ENCODE measurements at regions of chr4 and their contacts with region 1.

Region 1: GRCh38 chr4:163544407-163545038 is 50.0 kb downstream of the TMA16 start:
- DNase-seq: no peak
- ATAC-seq: peak; percentile 95
- H3K4me3 ChIP-seq: no peak overlapping the region
- H3K27ac ChIP-seq: no peak overlapping the region
- H3K4me1 ChIP-seq: no peaks in the 10 kb centered on the region
- H3K27me3 ChIP-seq: no peaks in the 10 kb centered on the region
- CTCF ChIP-seq: peak; percentile 92 to 93 (median 92)
- EP300 ChIP-seq: no peak
- POLR2A ChIP-seq: no peak
- RAD21 ChIP-seq: peak; percentile 84

Region 2: GRCh38 chr4:163107754-163108153 is 436.8 kb before region 1 on chr4:
- CTCF ChIA-PET with region 1: interaction called, 4 read pairs
- POLR2A ChIA-PET with region 1: no interaction called
- RAD21 ChIA-PET with region 1: no interaction called
- SMC1A ChIA-PET with region 1: interaction called, 3 read pairs
- in situ Hi-C with region 1: no loop called
- intact Hi-C with region 1: loop called (anchors 5 kb)
- DNase-seq: no peak
- ATAC-seq: peak; percentile 63
- H3K4me3 ChIP-seq: no peak overlapping the region
- H3K27ac ChIP-seq: no peak overlapping the region
- H3K4me1 ChIP-seq: peaks cover 4% of the 10 kb centered on the region
- H3K27me3 ChIP-seq: no peaks in the 10 kb centered on the region
- CTCF ChIP-seq: peak; percentile 13 to 30 (median 25); a peak in 2 of 6 replicates
- EP300 ChIP-seq: no peak
- POLR2A ChIP-seq: no peak
- RAD21 ChIP-seq: peak; percentile 61

Region 3: DNA sequence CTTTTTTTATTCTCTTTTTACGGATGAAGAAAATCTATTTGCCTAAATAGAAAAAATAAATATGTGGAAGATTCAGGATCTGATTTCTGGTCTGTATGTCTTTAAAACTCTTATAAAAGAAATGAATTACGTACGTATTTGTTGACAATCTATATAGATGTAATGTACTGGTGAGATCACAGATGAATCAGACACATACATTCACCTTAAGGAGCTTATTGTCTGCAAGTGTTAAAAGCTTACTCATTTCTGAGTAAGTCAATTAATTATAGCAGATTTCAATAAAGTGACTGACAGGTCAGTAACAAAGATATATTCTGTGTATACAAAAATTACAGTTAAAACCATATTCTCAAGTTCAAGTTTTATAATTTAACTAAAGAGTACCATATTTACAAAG is 311.2 kb before region 1 on chr4:
- CTCF ChIA-PET with region 1: no interaction called
- POLR2A ChIA-PET with region 1: no interaction called
- RAD21 ChIA-PET with region 1: no interaction called
- SMC1A ChIA-PET with region 1: no interaction called
- in situ Hi-C with region 1: no loop called
- intact Hi-C with region 1: no loop called
- DNase-seq: no peak
- ATAC-seq: no peak
- H3K4me3 ChIP-seq: no peak overlapping the region
- H3K27ac ChIP-seq: no peak overlapping the region
- H3K4me1 ChIP-seq: no peaks in the 10 kb centered on the region
- H3K27me3 ChIP-seq: no peaks in the 10 kb centered on the region
- CTCF ChIP-seq: no peak
- EP300 ChIP-seq: no peak
- POLR2A ChIP-seq: no peak
- RAD21 ChIP-seq: no peak

Region 4: GRCh38 chr4:163473576-163473975 is 70.9 kb before region 1 on chr4 and contains the start of gene TKTL2:
- CTCF ChIA-PET with region 1: interaction called, 11 read pairs
- POLR2A ChIA-PET with region 1: no interaction called
- RAD21 ChIA-PET with region 1: interaction called, 3 read pairs
- SMC1A ChIA-PET with region 1: interaction called, 3 read pairs
- in situ Hi-C with region 1: no loop called
- intact Hi-C with region 1: no loop called
- DNase-seq: no peak
- ATAC-seq: no peak
- H3K4me3 ChIP-seq: no peak within 1 kb of the TSS
- H3K27ac ChIP-seq: no peak within 1 kb of the TSS
- H3K4me1 ChIP-seq: no peaks in the 10 kb centered on the region
- H3K27me3 ChIP-seq: no peaks in the 10 kb centered on the region
- CTCF ChIP-seq: no peak
- EP300 ChIP-seq: no peak
- POLR2A ChIP-seq: no peak
- RAD21 ChIP-seq: no peak
- polyA plus RNA-seq, gene TKTL2: 0.03 TPM in 1 of 2 experiments, not detected in the other

Region 5: DNA sequence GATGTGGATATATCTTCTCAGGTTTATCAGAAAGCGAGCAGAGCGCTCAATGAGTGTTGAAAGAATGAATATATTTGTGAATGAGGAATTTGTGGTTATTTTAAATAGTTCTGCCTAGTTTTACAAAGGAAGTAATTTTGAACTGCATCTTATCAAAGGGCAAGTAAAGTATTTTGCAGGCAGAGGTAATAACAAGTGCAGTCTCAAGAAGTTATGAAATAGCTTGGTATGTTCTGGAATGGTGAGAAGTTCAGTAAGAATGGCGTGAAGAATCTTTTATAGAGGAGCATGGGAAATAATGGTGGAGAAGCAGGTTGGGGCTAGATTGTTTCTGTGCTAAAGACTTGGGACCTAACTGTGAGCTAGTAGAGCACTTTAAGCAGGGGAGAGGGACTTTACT is 39.1 kb before region 1 on chr4:
- CTCF ChIA-PET with region 1: interaction called, 18 read pairs
- POLR2A ChIA-PET with region 1: interaction called, 3 read pairs
- RAD21 ChIA-PET with region 1: no interaction called
- SMC1A ChIA-PET with region 1: interaction called, 10 read pairs
- in situ Hi-C with region 1: no loop called
- intact Hi-C with region 1: no loop called
- DNase-seq: no peak
- ATAC-seq: peak; percentile 11; the same call in 2 of the 3 replicates
- H3K4me3 ChIP-seq: no peak overlapping the region
- H3K27ac ChIP-seq: no peak overlapping the region
- H3K4me1 ChIP-seq: peaks cover 10% of the 10 kb centered on the region
- H3K27me3 ChIP-seq: no peaks in the 10 kb centered on the region
- CTCF ChIP-seq: no peak
- EP300 ChIP-seq: no peak
- POLR2A ChIP-seq: no peak
- RAD21 ChIP-seq: no peak

Region 6: GRCh38 chr4:163562496-163562895 is 18.0 kb after region 1 on chr4:
- CTCF ChIA-PET with region 1: interaction called, 6 read pairs
- POLR2A ChIA-PET with region 1: no interaction called
- RAD21 ChIA-PET with region 1: no interaction called
- SMC1A ChIA-PET with region 1: interaction called, 14 read pairs
- in situ Hi-C with region 1: no loop called
- intact Hi-C with region 1: no loop called
- DNase-seq: no peak
- ATAC-seq: peak; percentile 52
- H3K4me3 ChIP-seq: no peak overlapping the region
- H3K27ac ChIP-seq: no peak overlapping the region
- H3K4me1 ChIP-seq: peaks cover 8% of the 10 kb centered on the region; the same call in 1 of the 2 replicates
- H3K27me3 ChIP-seq: no peaks in the 10 kb centered on the region
- CTCF ChIP-seq: no peak
- EP300 ChIP-seq: no peak
- POLR2A ChIP-seq: no peak
- RAD21 ChIP-seq: no peak

Region 7: GRCh38 chr4:163694385-163694784 is 149.9 kb after region 1 on chr4:
- CTCF ChIA-PET with region 1: interaction called, 16 read pairs
- POLR2A ChIA-PET with region 1: no interaction called
- RAD21 ChIA-PET with region 1: no interaction called
- SMC1A ChIA-PET with region 1: interaction called, 3 read pairs
- in situ Hi-C with region 1: no loop called
- intact Hi-C with region 1: no loop called
- DNase-seq: no peak
- ATAC-seq: no peak
- H3K4me3 ChIP-seq: no peak overlapping the region
- H3K27ac ChIP-seq: no peak overlapping the region
- H3K4me1 ChIP-seq: no peaks in the 10 kb centered on the region
- H3K27me3 ChIP-seq: no peaks in the 10 kb centered on the region
- CTCF ChIP-seq: no peak
- EP300 ChIP-seq: no peak
- POLR2A ChIP-seq: no peak
- RAD21 ChIP-seq: no peak

Region 8: GRCh38 chr4:163833669-163834068 is 289.1 kb after region 1 on chr4:
- CTCF ChIA-PET with region 1: no interaction called
- POLR2A ChIA-PET with region 1: no interaction called
- RAD21 ChIA-PET with region 1: no interaction called
- SMC1A ChIA-PET with region 1: no interaction called
- in situ Hi-C with region 1: no loop called
- intact Hi-C with region 1: no loop called
- DNase-seq: no peak
- ATAC-seq: no peak
- H3K4me3 ChIP-seq: no peak overlapping the region
- H3K27ac ChIP-seq: no peak overlapping the region
- H3K4me1 ChIP-seq: no peaks in the 10 kb centered on the region
- H3K27me3 ChIP-seq: no peaks in the 10 kb centered on the region
- CTCF ChIP-seq: no peak
- EP300 ChIP-seq: no peak
- POLR2A ChIP-seq: no peak
- RAD21 ChIP-seq: no peak

Region 9: DNA sequence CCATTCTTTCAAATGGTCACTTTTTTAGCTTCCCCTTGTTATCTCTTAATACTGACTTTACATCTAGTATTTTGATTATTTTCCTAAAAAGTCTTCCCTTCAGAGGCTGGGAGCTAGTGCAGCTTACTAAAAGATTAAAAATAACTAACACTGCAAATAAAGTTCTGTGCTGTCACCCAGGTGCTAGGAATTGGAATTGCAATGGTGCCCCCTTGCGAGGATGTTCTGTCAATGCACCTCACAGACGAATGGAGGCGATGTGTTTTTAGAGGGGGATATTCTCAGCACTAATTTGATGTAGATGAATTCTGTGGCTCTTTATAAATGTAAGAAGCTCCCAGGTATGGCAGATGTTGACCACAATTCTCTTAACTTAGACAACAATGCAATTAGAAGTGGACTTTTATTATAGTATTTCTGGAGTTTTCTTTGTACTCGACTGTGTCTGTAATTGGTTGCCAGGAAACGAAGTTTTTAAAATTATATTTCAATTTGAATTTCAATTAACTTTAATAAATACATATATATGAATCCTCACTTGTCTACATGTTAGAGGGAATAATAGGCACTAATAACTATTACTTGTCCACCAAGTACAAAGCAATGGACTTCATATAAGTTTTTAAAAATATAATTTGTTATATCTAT is 1187.4 kb after region 1 on chr4:
- CTCF ChIA-PET with region 1: interaction called, 43 read pairs
- POLR2A ChIA-PET with region 1: no interaction called
- RAD21 ChIA-PET with region 1: interaction called, 18 read pairs
- SMC1A ChIA-PET with region 1: interaction called, 27 read pairs
- in situ Hi-C with region 1: no loop called
- intact Hi-C with region 1: no loop called
- DNase-seq: peak; percentile 3
- ATAC-seq: peak; percentile 85
- H3K4me3 ChIP-seq: no peak overlapping the region
- H3K27ac ChIP-seq: no peak overlapping the region
- H3K4me1 ChIP-seq: no peaks in the 10 kb centered on the region
- H3K27me3 ChIP-seq: no peaks in the 10 kb centered on the region; a peak in 1 of 4 replicates
- CTCF ChIP-seq: peak; percentile 82 to 88 (median 82)
- EP300 ChIP-seq: no peak
- POLR2A ChIP-seq: no peak
- RAD21 ChIP-seq: peak; percentile 92